Heart left ventricle (tissue), 16 donors: ENCODE measurements at regions of chr10 and their contacts with region 1.

Region 1: GRCh38 chr10:92573798-92574547 is at the start of gene IDE:
- DNase-seq: peak; percentile 89 to 95 (median 91)
- ATAC-seq: peak; percentile 95 to 98 (median 96)
- H3K4me3 ChIP-seq: peak within 1 kb of the TSS; percentile 71 to 98 (median 91)
- H3K27ac ChIP-seq: peak within 1 kb of the TSS; percentile 88 to 99 (median 93)
- H3K4me1 ChIP-seq: peaks cover 0 to 37% (median 22%) of the 10 kb centered on the region in 12 donors
- H3K27me3 ChIP-seq: no peaks in the 10 kb centered on the region
- CTCF ChIP-seq: peak; percentile 67 to 93 (median 84)
- POLR2A ChIP-seq: peak in 1 of 2 donors; percentile 56
- total RNA-seq, gene IDE: 24.6 to 51.3 (median 47.0) TPM

Region 2: GRCh38 chr10:92517034-92517655 is 56.8 kb before region 1 on chr10:
- intact Hi-C with region 1: loop called (anchors 1 to 5 kb)
- DNase-seq: peak in 3 of 5 donors; percentile 55 to 69 (median 61)
- ATAC-seq: peak; percentile 73 to 85 (median 82)
- H3K4me3 ChIP-seq: no peak overlapping the region
- H3K27ac ChIP-seq: no peak overlapping the region
- H3K4me1 ChIP-seq: peaks cover 0 to 3% (median 0%) of the 10 kb centered on the region in 12 donors
- H3K27me3 ChIP-seq: no peaks in the 10 kb centered on the region
- CTCF ChIP-seq: peak; percentile 69 to 85 (median 80)
- POLR2A ChIP-seq: no peak

Region 3: GRCh38 chr10:92592761-92593618 is 19.0 kb after region 1 on chr10 and contains the start of gene KIF11:
- intact Hi-C with region 1: loop called in 1 of 10 experiments (anchors 1 kb)
- DNase-seq: peak; percentile 97 to 99 (median 98)
- ATAC-seq: peak; percentile 96 to 97 (median 96)
- H3K4me3 ChIP-seq: peak within 1 kb of the TSS; percentile 35 to 94 (median 69)
- H3K27ac ChIP-seq: peak within 1 kb of the TSS; percentile 75 to 97 (median 93)
- H3K4me1 ChIP-seq: peaks cover 0 to 29% (median 12%) of the 10 kb centered on the region in 12 donors
- H3K27me3 ChIP-seq: no peaks in the 10 kb centered on the region
- CTCF ChIP-seq: peak in 1 of 12 donors; percentile 11
- POLR2A ChIP-seq: peak in 1 of 2 donors; percentile 80
- total RNA-seq, gene KIF11: 0.13 to 7.0 (median 0.76) TPM

Region 4: DNA sequence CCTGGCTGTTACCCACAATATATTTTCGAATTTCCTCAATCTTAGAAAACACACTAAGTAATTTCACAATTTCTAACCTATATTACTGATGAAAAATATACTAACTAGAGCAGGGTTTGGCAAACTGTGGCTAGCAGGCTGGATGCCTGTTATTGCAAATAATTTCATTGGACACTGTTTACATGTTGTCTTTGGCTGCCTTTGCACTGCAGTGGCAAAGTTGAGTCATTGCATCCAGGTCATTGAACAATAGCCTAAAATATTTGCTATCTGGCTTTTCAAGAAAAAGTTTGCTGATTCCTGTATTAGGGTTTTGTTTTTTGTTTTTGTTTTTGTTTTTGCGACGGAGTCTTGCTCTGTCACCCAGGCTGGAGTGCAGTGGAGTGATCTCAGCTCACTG is 66.1 kb after region 1 on chr10:
- intact Hi-C with region 1: no loop called
- DNase-seq: no peak
- ATAC-seq: no peak
- H3K4me3 ChIP-seq: no peak overlapping the region
- H3K27ac ChIP-seq: no peak overlapping the region
- H3K4me1 ChIP-seq: no peaks in the 10 kb centered on the region
- H3K27me3 ChIP-seq: no peaks in the 10 kb centered on the region
- CTCF ChIP-seq: no peak
- POLR2A ChIP-seq: no peak